Natural killer cell (primary cell): ENCODE measurements at regions of chr14 and their contacts with region 1.

Region 1: GRCh38 chr14:50773632-50774541 is 57.1 kb downstream of the NIN start:
- DNase-seq: peak in 1 of 2 donors; percentile 50
- ATAC-seq: no peak
- H3K4me3 ChIP-seq: no peak overlapping the region
- H3K4me3 Mint-ChIP-seq: no peak overlapping the region
- H3K27ac ChIP-seq: no peak overlapping the region
- H3K27ac Mint-ChIP-seq: peak overlapping the region in 1 of 2 donors; percentile 1
- H3K4me1 ChIP-seq: peaks cover 7% of the 10 kb centered on the region
- H3K4me1 Mint-ChIP-seq: peaks cover 5 to 6% of the 10 kb centered on the region in 2 donors
- H3K27me3 ChIP-seq: no peaks in the 10 kb centered on the region
- H3K27me3 Mint-ChIP-seq: no peaks in the 10 kb centered on the region
- CTCF ChIP-seq: peak; percentile 41

Region 2: DNA sequence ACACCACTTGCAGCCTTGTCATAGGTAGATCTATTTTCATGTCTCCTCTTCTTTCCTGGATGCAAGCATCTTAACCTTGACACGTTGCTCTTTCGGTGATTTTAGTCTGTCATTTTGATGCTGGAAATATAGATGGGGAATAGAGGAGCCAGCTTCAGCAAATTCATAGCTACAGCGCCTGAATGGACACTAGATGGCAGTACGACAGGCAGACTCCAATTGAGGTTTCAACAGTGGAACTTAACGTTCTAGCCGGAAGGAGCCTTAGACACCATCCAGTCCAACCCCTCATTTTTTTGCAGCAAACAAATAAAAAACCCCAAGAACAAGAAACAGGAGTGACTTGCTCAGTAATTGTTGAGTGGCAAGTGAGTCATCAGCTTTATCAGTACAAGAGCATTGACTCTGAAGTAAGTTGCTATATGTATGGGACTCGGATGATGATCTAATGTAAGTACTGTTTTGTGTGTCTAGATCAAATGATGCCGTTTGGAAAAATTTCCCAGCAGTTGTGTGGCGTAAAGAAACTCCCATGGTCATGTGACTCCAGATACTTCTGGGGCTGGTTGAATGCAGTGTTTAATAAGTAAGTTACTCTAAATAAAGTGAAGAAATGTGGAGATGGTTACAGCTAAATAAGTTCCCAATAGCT is 452.8 kb before region 1 on chr14:
- intact Hi-C with region 1: loop called (anchors 10 kb)
- DNase-seq: peak; percentile 35 to 91
- ATAC-seq: peak; percentile 95 to 99 (median 96)
- H3K4me3 ChIP-seq: no peak overlapping the region
- H3K4me3 Mint-ChIP-seq: no peak overlapping the region
- H3K27ac ChIP-seq: peak overlapping the region; percentile 70
- H3K27ac Mint-ChIP-seq: no peak overlapping the region
- H3K4me1 ChIP-seq: no peaks in the 10 kb centered on the region
- H3K4me1 Mint-ChIP-seq: peaks cover 4 to 13% of the 10 kb centered on the region in 2 donors
- H3K27me3 ChIP-seq: no peaks in the 10 kb centered on the region
- H3K27me3 Mint-ChIP-seq: no peaks in the 10 kb centered on the region
- CTCF ChIP-seq: peak; percentile 74

Region 3: DNA sequence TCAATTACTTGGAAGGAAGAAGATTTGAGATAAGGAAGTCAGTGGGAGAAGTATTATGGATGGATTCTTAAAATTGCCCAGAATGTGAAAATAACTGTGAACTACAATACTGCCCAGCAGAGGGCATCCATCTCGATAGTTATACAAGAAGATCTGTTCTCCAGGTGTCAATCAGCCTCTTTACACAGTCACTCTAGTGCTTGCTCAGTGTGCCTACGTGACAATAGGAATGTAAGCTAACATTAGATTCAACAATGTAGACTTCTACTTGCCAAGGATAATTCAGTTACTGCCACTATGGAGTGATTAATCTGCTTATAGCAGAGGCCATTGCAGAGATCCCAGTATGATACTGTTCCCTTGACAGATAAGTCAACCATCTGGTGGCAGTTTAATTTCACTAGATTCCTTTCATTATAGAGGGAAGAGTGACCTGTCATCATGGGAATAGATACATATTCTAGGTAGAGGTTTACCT is 230.9 kb before region 1 on chr14:
- intact Hi-C with region 1: loop called (anchors 1 kb)
- DNase-seq: peak in 1 of 2 donors; percentile 72
- ATAC-seq: peak; percentile 58 to 89 (median 78)
- H3K4me3 ChIP-seq: no peak overlapping the region
- H3K4me3 Mint-ChIP-seq: no peak overlapping the region
- H3K27ac ChIP-seq: no peak overlapping the region
- H3K27ac Mint-ChIP-seq: no peak overlapping the region
- H3K4me1 ChIP-seq: peaks cover 3% of the 10 kb centered on the region
- H3K4me1 Mint-ChIP-seq: peaks cover 8 to 11% of the 10 kb centered on the region in 2 donors
- H3K27me3 ChIP-seq: no peaks in the 10 kb centered on the region
- H3K27me3 Mint-ChIP-seq: peaks cover 0 to 9% of the 10 kb centered on the region in 2 donors
- CTCF ChIP-seq: peak; percentile 70

Region 4: DNA sequence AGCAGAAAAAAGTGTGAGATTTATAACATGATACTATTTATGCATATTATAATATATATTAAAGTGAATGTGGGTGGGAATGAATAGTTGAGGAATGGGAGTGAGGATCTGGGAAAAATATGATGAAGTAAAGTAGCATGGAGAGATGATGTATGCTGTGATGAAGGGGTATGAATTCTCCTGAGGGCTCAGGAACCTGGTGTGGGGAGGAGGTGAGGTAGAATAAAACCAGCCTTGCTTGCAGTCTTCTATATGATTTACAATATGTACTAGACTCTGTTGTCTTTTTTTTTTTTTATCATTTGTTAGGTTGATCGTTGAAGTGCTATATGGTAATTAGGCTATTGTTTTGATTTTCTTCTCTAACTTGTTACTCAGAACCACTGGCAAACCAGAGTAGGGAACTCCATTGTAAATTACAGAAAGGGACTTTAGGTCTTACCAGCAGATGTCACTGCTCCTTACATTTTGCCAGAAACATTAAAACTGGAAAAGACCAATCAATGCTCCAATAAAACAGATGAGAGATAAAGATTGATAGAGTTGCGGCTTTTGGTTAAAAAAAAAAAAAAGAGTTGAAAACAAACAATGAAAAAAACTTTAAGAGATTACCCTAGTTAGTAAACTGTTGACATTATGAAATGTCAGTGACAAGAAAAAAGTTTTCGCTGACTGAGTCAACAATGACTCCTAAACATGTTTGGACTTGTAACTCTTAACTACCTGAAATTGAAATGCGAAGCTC is 174.0 kb before region 1 on chr14:
- intact Hi-C with region 1: loop called (anchors 10 kb)
- DNase-seq: peak in 1 of 2 donors; percentile 53
- ATAC-seq: no peak
- H3K4me3 ChIP-seq: no peak overlapping the region
- H3K4me3 Mint-ChIP-seq: no peak overlapping the region
- H3K27ac ChIP-seq: no peak overlapping the region
- H3K27ac Mint-ChIP-seq: no peak overlapping the region
- H3K4me1 ChIP-seq: no peaks in the 10 kb centered on the region
- H3K4me1 Mint-ChIP-seq: no peaks in the 10 kb centered on the region
- H3K27me3 ChIP-seq: no peaks in the 10 kb centered on the region
- H3K27me3 Mint-ChIP-seq: no peaks in the 10 kb centered on the region
- CTCF ChIP-seq: peak; percentile 10

Region 5: GRCh38 chr14:51006781-51007211 is 232.9 kb after region 1 on chr14:
- intact Hi-C with region 1: no loop called
- DNase-seq: no peak
- ATAC-seq: no peak
- H3K4me3 ChIP-seq: no peak overlapping the region
- H3K4me3 Mint-ChIP-seq: no peak overlapping the region
- H3K27ac ChIP-seq: no peak overlapping the region
- H3K27ac Mint-ChIP-seq: no peak overlapping the region
- H3K4me1 ChIP-seq: no peaks in the 10 kb centered on the region
- H3K4me1 Mint-ChIP-seq: no peaks in the 10 kb centered on the region
- H3K27me3 ChIP-seq: no peaks in the 10 kb centered on the region
- H3K27me3 Mint-ChIP-seq: peaks cover 5 to 10% of the 10 kb centered on the region in 2 donors
- CTCF ChIP-seq: no peak